HepG2 (cell line): ENCODE measurements at regions of chr4 and their contacts with region 1.

Region 1: GRCh38 chr4:89878611-89879010 is 16.0 kb upstream of the MMRN1 start:
- DNase-seq: no peak
- ATAC-seq: no peak
- H3K4me3 ChIP-seq: no peak overlapping the region
- H3K27ac ChIP-seq: no peak overlapping the region
- H3K4me1 ChIP-seq: no peaks in the 10 kb centered on the region
- H3K27me3 ChIP-seq: no peaks in the 10 kb centered on the region
- CTCF ChIP-seq: no peak
- EP300 ChIP-seq: no peak
- POLR2A ChIP-seq: no peak
- RAD21 ChIP-seq: no peak

Region 2: DNA sequence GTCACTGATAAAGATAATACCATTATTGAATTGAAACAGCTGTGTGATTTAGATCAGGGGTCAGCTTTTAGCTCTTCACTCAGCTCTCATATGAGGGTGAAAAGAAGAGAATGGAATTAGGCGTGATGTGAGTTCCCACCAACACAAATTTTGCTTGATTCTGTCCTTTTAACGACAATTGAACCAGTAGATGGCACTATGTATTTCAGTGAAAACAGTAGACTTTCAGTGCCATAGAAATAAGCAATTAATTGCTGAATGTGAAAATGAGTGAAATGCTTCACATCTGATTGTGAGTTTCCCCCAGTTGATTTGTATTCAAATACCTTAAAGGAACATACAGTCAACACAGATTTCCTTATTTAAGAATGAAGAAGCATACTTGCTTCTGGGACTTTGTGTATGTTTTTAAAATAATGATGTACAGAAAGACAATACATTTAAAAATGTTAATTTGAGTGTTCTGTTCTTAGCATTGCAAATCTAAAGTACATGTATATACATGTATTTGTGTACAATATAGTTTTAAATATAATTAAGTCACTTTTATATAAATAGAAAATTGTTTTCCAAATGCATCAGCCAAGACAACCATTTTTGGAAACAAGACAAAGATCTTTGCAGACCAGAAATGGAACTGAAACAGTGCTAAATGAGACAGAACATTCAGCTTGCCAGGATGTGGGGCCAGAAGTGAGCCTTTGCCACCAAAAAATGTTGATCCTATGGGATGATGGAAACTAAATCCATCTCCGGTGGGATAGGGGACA is 220.5 kb before region 1 on chr4:
- CTCF ChIA-PET with region 1: no interaction called
- POLR2A ChIA-PET with region 1: no interaction called
- in situ Hi-C with region 1: loop called (anchors 10 kb)
- intact Hi-C with region 1: no loop called
- DNase-seq: peak; percentile 28
- ATAC-seq: no peak; the same call in 2 of the 3 replicates
- H3K4me3 ChIP-seq: no peak overlapping the region
- H3K27ac ChIP-seq: no peak overlapping the region
- H3K4me1 ChIP-seq: 0 out of 2 replicates have a peak, but pooled peaks cover 4% of the 10 kb centered on the region
- H3K27me3 ChIP-seq: peaks cover 0 to 5% of the 10 kb centered on the region in 2 experiments; a peak in 1 of 5 replicates
- CTCF ChIP-seq: peak; percentile 64
- EP300 ChIP-seq: no peak
- POLR2A ChIP-seq: no peak
- RAD21 ChIP-seq: no peak